ENCODE measurements at regions of chr20 and their contacts with region 1.

Region 1: GRCh38 chr20:63537525-63538203 is 488 bp upstream of the PTK6 start:
- DNase-seq: peak; percentile 97
- ATAC-seq: peak; percentile 93
- H3K4me3 Mint-ChIP-seq: peak overlapping the region; percentile 63
- H3K27ac Mint-ChIP-seq: peak overlapping the region; percentile 84
- H3K4me1 Mint-ChIP-seq: peaks cover 19% of the 10 kb centered on the region
- H3K27me3 Mint-ChIP-seq: no peaks in the 10 kb centered on the region

Region 2: GRCh38 chr20:63520504-63520933 is 17.1 kb before region 1 on chr20 and contains the start of gene PPDPF:
- CTCF ChIA-PET with region 1: interaction called, 12 read pairs
- POLR2A ChIA-PET with region 1: interaction called, 22 read pairs
- DNase-seq: peak; percentile 87
- ATAC-seq: peak; percentile 83
- H3K4me3 Mint-ChIP-seq: peak within 1 kb of the TSS; percentile 77
- H3K27ac Mint-ChIP-seq: peak within 1 kb of the TSS; percentile 81
- H3K4me1 Mint-ChIP-seq: peaks cover 9% of the 10 kb centered on the region
- H3K27me3 Mint-ChIP-seq: peaks cover 8% of the 10 kb centered on the region
- total RNA-seq, gene PPDPF: 292 to 296 TPM

Region 3: DNA sequence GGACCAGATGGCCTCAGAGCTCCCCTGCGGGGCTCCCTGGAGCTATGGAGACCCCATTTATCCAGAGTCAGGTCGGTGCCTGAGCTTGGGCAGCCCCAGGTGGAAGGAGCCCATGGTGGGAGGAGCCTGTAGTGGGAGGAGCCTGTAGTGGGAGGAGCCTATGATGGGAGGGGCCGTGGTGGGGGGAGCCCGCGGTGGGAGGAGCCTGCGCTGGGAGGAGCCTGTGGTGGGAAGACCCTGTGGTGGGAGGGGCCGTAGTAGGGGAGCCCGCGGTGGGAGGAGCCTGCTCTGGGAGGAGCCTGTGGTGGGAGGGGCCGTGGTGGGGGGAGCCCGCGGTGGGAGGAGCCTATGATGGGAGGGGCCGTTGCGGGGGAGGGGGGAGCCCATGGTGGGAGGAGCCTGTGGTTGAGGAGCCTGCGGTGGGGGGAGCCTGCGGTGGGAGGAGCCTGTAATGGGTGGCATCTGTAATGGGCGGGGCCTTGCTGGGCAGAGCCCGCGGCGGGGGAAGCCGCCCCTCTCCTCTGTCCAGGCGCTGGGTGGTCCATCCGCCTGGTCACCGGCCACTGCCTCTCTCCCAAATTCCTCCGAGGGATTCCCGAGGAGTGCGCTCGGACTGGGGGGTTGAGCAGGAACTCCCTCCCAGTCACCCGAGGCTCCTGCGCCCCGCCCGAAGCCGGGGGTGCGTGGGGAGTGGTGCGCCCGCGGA is 15.7 kb after region 1 on chr20:
- CTCF ChIA-PET with region 1: interaction called, 17 read pairs
- POLR2A ChIA-PET with region 1: interaction called, 3 read pairs
- DNase-seq: peak; percentile 90
- ATAC-seq: peak; percentile 71
- H3K4me3 Mint-ChIP-seq: peak overlapping the region; percentile 63
- H3K27ac Mint-ChIP-seq: peak overlapping the region; percentile 91
- H3K4me1 Mint-ChIP-seq: peaks cover 21% of the 10 kb centered on the region
- H3K27me3 Mint-ChIP-seq: peaks cover 16% of the 10 kb centered on the region

Region 4: GRCh38 chr20:63567386-63568169 is 29.9 kb after region 1 on chr20:
- CTCF ChIA-PET with region 1: interaction called, 8 read pairs
- POLR2A ChIA-PET with region 1: interaction called, 12 read pairs
- DNase-seq: peak; percentile 74
- ATAC-seq: peak; percentile 64
- H3K4me3 Mint-ChIP-seq: peak overlapping the region; percentile 61
- H3K27ac Mint-ChIP-seq: peak overlapping the region; percentile 76
- H3K4me1 Mint-ChIP-seq: peaks cover 34% of the 10 kb centered on the region
- H3K27me3 Mint-ChIP-seq: no peaks in the 10 kb centered on the region

Region 5: DNA sequence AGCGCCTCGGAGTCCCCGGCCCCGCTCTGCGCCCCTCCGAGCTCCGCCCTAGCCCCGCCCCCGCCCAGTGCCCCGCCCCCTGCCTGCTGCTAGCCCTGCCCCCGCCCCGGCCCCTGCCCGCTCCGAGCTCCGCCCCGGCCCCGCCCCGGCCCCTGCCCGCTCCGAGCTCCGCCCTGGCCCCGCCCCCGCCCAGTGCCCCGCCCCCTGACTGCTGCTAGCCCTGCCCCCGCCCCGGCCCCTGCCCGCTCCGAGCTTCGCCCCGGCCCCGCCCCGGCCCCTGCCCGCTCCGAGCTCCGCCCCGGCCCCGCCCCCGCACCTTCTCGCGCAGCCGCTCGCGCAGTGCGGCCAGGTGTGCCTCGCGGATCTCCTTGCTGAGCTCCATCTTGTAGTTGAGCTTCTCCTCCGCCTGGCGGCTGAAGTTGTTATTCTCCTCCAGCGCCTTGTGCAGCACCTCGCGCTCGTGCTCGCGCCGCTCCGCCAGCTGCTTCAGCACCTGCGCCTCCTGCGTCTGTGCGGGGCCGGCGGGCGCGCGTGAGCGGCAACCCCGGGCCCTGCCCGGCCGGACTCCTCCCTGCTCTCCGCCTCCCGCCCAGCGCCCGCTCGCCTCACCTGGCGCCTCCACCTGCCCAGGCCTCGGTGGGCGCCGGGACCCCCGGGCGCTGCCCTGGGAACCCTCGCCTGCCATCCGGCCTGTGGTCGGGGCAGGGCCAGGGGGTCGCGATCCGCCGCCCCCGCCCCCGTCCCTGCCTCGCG is 104.3 kb after region 1 on chr20:
- CTCF ChIA-PET with region 1: interaction called, 39 read pairs
- POLR2A ChIA-PET with region 1: interaction called, 5 read pairs
- DNase-seq: peak; percentile 98
- ATAC-seq: peak; percentile 81
- H3K4me3 Mint-ChIP-seq: peak overlapping the region; percentile 74
- H3K27ac Mint-ChIP-seq: peak overlapping the region; percentile 52
- H3K4me1 Mint-ChIP-seq: peaks cover 25% of the 10 kb centered on the region
- H3K27me3 Mint-ChIP-seq: no peaks in the 10 kb centered on the region

Region 6: DNA sequence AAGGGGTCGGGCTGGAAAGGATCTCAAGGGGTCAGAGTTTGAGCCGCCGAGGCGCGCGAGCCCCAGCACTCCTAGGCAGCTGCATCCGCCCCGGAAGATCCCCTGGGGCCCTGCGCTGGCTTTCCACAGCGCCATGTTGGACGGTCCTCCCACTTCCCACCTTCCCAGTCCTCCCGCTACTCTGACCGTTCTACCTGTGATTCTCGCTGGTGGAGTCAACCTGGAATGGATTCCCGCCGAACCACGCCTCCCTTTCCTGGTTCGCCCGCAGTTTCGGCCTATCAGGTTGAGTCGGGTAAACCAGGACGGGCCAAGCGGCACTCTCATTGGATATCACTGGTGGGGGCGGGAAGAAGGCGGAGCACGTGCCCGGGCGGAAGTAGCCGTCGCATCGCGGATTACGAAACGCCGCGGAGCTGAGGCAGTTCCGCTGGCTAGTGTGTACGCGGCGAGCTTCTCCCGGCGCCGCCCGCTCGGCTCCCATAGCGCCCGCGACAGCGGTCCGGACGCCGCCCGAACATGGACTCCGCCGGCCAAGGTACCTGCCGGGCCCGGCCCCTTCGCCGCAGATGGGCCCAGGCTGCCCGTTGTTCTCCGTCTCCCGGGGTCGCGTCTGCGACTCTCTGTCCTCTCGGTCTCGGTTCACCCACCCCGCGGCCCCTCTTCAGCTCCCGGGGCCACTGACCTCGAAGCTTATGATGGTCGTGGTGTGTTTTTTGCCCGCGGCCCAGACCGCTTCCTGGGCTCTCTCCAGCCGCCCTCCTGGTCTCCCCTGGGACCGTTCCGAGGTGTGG is 327.4 kb after region 1 on chr20 and contains the start of gene TPD52L2:
- CTCF ChIA-PET with region 1: interaction called, 17 read pairs
- POLR2A ChIA-PET with region 1: interaction called, 7 read pairs
- DNase-seq: peak; percentile 99
- ATAC-seq: peak; percentile 90
- H3K4me3 Mint-ChIP-seq: peak within 1 kb of the TSS; percentile 94
- H3K27ac Mint-ChIP-seq: peak within 1 kb of the TSS; percentile 96
- H3K4me1 Mint-ChIP-seq: peaks cover 22% of the 10 kb centered on the region
- H3K27me3 Mint-ChIP-seq: no peaks in the 10 kb centered on the region
- total RNA-seq, gene TPD52L2: 35.7 to 40.0 TPM

Region 7: GRCh38 chr20:63973636-63974402 is 436.2 kb after region 1 on chr20:
- CTCF ChIA-PET with region 1: interaction called, 10 read pairs
- POLR2A ChIA-PET with region 1: no interaction called
- DNase-seq: peak; percentile 79
- ATAC-seq: peak; percentile 54
- H3K4me3 Mint-ChIP-seq: no peak overlapping the region
- H3K27ac Mint-ChIP-seq: no peak overlapping the region
- H3K4me1 Mint-ChIP-seq: peaks cover 52% of the 10 kb centered on the region
- H3K27me3 Mint-ChIP-seq: no peaks in the 10 kb centered on the region